ENCODE measurements at regions of chr12 and their contacts with region 1.

Region 1: DNA sequence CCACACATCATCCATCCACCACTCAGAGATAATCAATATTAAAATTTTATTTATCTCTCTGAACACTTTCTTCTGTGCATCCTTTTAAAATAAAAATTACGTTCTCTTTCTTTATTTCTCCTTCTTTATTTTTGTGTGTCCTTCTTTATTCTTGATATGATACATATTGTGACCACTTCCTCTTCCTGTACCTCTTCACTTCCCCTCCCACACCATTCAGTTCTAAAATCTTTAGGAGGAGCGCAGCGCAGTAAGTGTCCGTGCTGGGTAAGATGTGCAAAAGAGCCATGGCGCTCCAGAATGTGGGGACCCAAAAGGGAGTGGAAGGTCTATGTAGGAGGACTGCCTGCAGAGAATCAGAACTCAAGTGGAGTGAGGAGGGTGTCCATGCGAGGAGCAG is 256.7 kb downstream of the ITPR2 start:
- DNase-seq: no peak
- H3K4me3 ChIP-seq: no peak overlapping the region
- H3K27ac ChIP-seq: no peak overlapping the region
- H3K4me1 ChIP-seq: no peaks in the 10 kb centered on the region
- H3K27me3 ChIP-seq: no peaks in the 10 kb centered on the region
- CTCF ChIP-seq: no peak
- EP300 ChIP-seq: no peak
- POLR2A ChIP-seq: no peak

Region 2: GRCh38 chr12:26629864-26630263 is 53.6 kb after region 1 on chr12:
- intact Hi-C with region 1: loop called in 1 of 4 experiments (anchors 10 kb)
- DNase-seq: no peak
- H3K4me3 ChIP-seq: no peak overlapping the region
- H3K27ac ChIP-seq: peak overlapping the region in 1 of 2 donors; percentile 16
- H3K4me1 ChIP-seq: peaks cover 2% of the 10 kb centered on the region
- H3K27me3 ChIP-seq: no peaks in the 10 kb centered on the region
- CTCF ChIP-seq: peak in 1 of 3 donors; percentile 47
- EP300 ChIP-seq: no peak
- POLR2A ChIP-seq: no peak